Activated naive CD4-positive, alpha-beta T cell treated with anti-CD3 and anti-CD28 coated beads, Interleukin-2, amount 10 ng/mL, durations not matched to agents 7 days and 5 days (primary cell): ENCODE measurements at regions of chrX and their contacts with region 1.

Region 1: DNA sequence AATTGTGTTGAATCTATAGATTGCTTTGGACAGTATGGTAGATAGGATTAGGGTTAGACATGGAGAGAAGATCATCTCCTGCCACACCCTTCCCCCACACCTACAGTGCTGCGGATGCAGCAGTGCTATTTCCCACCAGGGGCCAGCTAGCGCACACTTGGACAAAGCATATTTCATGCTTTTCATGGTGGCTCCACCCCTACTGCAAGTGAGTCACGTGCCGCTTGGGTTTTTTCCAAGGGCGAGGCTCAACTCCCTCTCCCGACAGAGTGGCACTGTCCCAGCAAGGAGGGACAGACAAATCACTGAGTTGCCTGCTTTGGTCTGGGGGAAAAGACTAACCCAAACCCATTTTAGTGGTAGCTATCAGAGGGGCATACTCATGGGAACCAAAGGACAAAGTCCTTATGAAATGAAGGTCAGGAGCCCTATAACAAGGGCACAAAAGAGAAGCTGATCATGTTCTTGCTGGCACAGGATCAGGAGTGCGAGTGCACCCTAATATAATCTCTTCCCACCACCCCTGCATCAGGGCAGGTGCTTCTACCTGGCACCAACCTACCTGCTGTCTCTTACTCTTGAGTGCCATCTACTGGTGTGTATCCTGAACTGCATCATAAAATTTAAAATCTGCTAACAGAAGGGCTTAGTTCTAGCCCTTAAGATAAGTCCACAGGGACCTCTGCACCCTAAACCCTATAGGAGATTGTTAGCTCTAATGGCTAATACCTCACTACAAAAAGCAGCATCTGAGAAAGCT is 55.1 kb upstream of the PGAM4 start:
- DNase-seq: peak; percentile 20
- H3K4me3 Mint-ChIP-seq: no peak overlapping the region
- H3K27ac Mint-ChIP-seq: no peak overlapping the region
- H3K4me1 Mint-ChIP-seq: peaks cover 5% of the 10 kb centered on the region
- H3K27me3 Mint-ChIP-seq: no peaks in the 10 kb centered on the region

Region 2: GRCh38 chrX:77910108-77910840 is 114.3 kb before region 1 on chrX and contains the start of gene ATP7A:
- CTCF ChIA-PET with region 1: interaction called, 21 read pairs
- DNase-seq: peak; percentile 94
- H3K4me3 Mint-ChIP-seq: peak within 1 kb of the TSS; percentile 97
- H3K27ac Mint-ChIP-seq: peak within 1 kb of the TSS; percentile 97
- H3K4me1 Mint-ChIP-seq: peaks cover 13% of the 10 kb centered on the region
- H3K27me3 Mint-ChIP-seq: no peaks in the 10 kb centered on the region

Region 3: DNA sequence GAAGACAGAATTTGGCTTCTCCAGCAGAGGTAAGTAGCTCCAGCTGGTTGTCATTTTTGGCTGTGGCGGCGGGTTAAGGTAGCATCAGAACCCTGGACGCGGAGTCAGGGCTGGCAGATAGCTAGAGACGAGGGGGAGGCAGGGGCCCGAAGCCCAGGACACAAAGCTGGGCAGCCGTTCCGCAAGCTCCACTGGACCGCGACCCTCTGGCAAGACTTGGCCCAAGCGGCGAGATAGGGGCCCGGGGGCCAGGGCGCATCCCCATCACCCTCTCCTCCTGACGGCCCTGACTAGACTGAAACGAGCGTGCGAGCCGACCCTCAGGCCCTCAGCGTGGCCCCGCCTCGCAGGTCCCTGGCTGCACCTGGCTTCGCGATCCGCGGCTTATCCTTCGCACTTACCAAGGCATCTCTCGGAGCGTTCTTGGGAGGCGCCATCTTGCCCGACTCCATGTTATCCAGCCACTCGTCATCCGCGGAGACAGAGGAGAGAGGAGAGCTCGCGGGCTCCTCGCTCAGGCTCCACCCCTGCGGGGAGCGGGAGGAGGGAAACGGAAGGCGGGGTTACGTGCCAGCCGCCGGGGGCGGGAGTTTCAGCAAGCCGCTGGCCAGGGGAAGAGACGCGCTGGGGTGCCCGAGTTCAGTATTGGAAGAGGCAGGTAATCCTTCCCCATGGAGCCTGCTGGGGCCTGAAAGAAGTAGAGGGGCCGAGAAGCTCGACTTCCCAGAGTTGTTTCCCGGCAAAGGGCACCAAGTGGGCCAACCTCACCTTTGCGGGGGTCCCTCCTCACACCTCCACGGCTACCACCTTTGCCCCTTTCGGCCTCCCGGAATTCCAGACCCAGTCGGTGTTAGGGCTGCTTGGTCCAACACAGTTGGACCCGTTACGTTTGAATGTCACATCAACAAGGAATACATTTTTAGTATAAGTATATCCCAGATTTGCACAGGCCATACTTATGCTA is 114.9 kb after region 1 on chrX and contains the start of gene TAF9B:
- CTCF ChIA-PET with region 1: no interaction called
- DNase-seq: peak; percentile 88
- H3K4me3 Mint-ChIP-seq: peak within 1 kb of the TSS; percentile 88
- H3K27ac Mint-ChIP-seq: peak within 1 kb of the TSS; percentile 96
- H3K4me1 Mint-ChIP-seq: peaks cover 14% of the 10 kb centered on the region
- H3K27me3 Mint-ChIP-seq: peaks cover 6% of the 10 kb centered on the region